Activated naive CD4-positive, alpha-beta T cell treated with anti-CD3 and anti-CD28 coated beads for 36 hours (primary cell): ENCODE measurements at regions of chr17 and their contacts with region 1.

Region 1: GRCh38 chr17:17723354-17724261 is 42.4 kb downstream of the RAI1 start:
- DNase-seq: peak; percentile 22
- H3K4me3 Mint-ChIP-seq: peak overlapping the region; percentile 80
- H3K27ac Mint-ChIP-seq: no peak overlapping the region
- H3K4me1 Mint-ChIP-seq: peaks cover 37% of the 10 kb centered on the region
- H3K27me3 Mint-ChIP-seq: peaks cover 24% of the 10 kb centered on the region

Region 2: GRCh38 chr17:17605729-17606088 is 117.9 kb before region 1 on chr17:
- CTCF ChIA-PET with region 1: no interaction called
- intact Hi-C with region 1: no loop called
- DNase-seq: no peak
- H3K4me3 Mint-ChIP-seq: no peak overlapping the region
- H3K27ac Mint-ChIP-seq: no peak overlapping the region
- H3K4me1 Mint-ChIP-seq: no peaks in the 10 kb centered on the region
- H3K27me3 Mint-ChIP-seq: no peaks in the 10 kb centered on the region

Region 3: GRCh38 chr17:17694169-17695081 is 29.2 kb before region 1 on chr17:
- CTCF ChIA-PET with region 1: no interaction called
- intact Hi-C with region 1: loop called (anchors 2 kb)
- DNase-seq: peak; percentile 80
- H3K4me3 Mint-ChIP-seq: peak overlapping the region; percentile 90
- H3K27ac Mint-ChIP-seq: peak overlapping the region; percentile 97
- H3K4me1 Mint-ChIP-seq: peaks cover 71% of the 10 kb centered on the region
- H3K27me3 Mint-ChIP-seq: no peaks in the 10 kb centered on the region

Region 4: DNA sequence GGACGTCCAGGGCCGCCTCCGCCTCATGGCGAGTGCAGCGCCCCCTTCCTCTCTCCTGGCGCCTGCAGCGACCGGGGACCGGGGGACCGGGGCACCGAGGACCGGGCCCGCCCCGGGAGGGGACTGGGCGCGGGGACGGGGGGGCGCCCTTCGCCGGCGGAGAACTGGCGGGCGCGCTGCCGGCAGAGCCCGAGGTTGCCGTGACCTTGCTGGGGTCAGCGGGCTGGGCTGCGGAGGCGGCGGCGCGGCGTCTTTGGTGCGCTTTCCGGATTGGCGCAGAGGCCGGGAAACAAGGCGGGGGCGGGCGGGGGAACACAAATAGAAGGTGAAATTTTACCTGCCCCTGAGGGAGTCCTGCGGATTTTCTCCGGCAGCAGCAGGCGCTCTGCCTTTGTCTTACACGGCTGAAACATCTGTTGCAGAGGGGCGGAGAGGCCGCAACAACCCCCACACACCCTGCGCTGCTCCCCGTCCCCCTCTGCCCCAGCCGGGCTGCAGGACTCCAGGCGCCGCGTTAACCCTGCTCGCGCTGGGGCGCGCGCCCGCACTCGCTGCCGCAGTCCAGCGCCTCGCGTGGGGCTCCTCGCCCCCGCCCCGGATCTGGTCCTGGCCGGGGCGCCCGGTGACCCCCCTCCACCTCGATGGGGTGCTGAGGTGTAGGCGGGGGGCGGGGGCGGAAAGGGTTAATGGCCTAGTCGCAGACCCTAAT is 59.7 kb after region 1 on chr17:
- CTCF ChIA-PET with region 1: no interaction called
- intact Hi-C with region 1: loop called (anchors 2 kb)
- DNase-seq: peak; percentile 71
- H3K4me3 Mint-ChIP-seq: peak overlapping the region; percentile 70
- H3K27ac Mint-ChIP-seq: no peak overlapping the region
- H3K4me1 Mint-ChIP-seq: peaks cover 21% of the 10 kb centered on the region
- H3K27me3 Mint-ChIP-seq: peaks cover 2% of the 10 kb centered on the region